B cell (primary cell): ENCODE measurements at regions of chr17 and their contacts with region 1.

Region 1: GRCh38 chr17:17237026-17237799 is at the start of gene FLCN:
- DNase-seq: peak; percentile 98
- ATAC-seq: peak; percentile 89
- H3K4me3 ChIP-seq: peak within 1 kb of the TSS; percentile 83 to 96 (median 91)
- H3K4me3 Mint-ChIP-seq: peak within 1 kb of the TSS; percentile 91
- H3K27ac ChIP-seq: peak within 1 kb of the TSS; percentile 95 to 100
- H3K27ac Mint-ChIP-seq: peak within 1 kb of the TSS; percentile 99
- H3K4me1 ChIP-seq: peaks cover 9 to 21% of the 10 kb centered on the region in 2 donors
- H3K4me1 Mint-ChIP-seq: peaks cover 24% of the 10 kb centered on the region
- H3K27me3 ChIP-seq: no peaks in the 10 kb centered on the region
- H3K27me3 Mint-ChIP-seq: no peaks in the 10 kb centered on the region
- CTCF ChIP-seq: no peak
- total RNA-seq, gene FLCN: 128 and 144 TPM in 2 replicates

Region 2: GRCh38 chr17:17186051-17186450 is 51.2 kb before region 1 on chr17:
- CTCF ChIA-PET with region 1: no interaction called
- POLR2A ChIA-PET with region 1: interaction called, 7 read pairs
- intact Hi-C with region 1: loop called (anchors 10 kb)
- DNase-seq: no peak
- ATAC-seq: no peak
- H3K4me3 ChIP-seq: no peak overlapping the region
- H3K4me3 Mint-ChIP-seq: no peak overlapping the region
- H3K27ac ChIP-seq: peak overlapping the region in 1 of 2 donors; percentile 52
- H3K27ac Mint-ChIP-seq: peak overlapping the region; percentile 32
- H3K4me1 ChIP-seq: peaks cover 19 to 37% of the 10 kb centered on the region in 2 donors
- H3K4me1 Mint-ChIP-seq: peaks cover 31% of the 10 kb centered on the region
- H3K27me3 ChIP-seq: no peaks in the 10 kb centered on the region
- H3K27me3 Mint-ChIP-seq: no peaks in the 10 kb centered on the region
- CTCF ChIP-seq: no peak

Region 3: GRCh38 chr17:17206124-17206912 is 30.9 kb before region 1 on chr17 and contains the start of gene PLD6:
- CTCF ChIA-PET with region 1: no interaction called
- POLR2A ChIA-PET with region 1: interaction called, 7 read pairs
- intact Hi-C with region 1: loop called (anchors 1 kb)
- DNase-seq: peak; percentile 96
- ATAC-seq: peak; percentile 85
- H3K4me3 ChIP-seq: peak within 1 kb of the TSS in 4 of 5 experiments; percentile 57 to 71 (median 59)
- H3K4me3 Mint-ChIP-seq: peak within 1 kb of the TSS; percentile 93
- H3K27ac ChIP-seq: peak within 1 kb of the TSS; percentile 65 to 66
- H3K27ac Mint-ChIP-seq: peak within 1 kb of the TSS; percentile 89
- H3K4me1 ChIP-seq: peaks cover 14 to 25% of the 10 kb centered on the region in 2 donors
- H3K4me1 Mint-ChIP-seq: peaks cover 20% of the 10 kb centered on the region
- H3K27me3 ChIP-seq: no peaks in the 10 kb centered on the region
- H3K27me3 Mint-ChIP-seq: no peaks in the 10 kb centered on the region
- CTCF ChIP-seq: no peak
- total RNA-seq, gene PLD6: 4.1 and 5.0 TPM in 2 replicates

Region 4: GRCh38 chr17:17216776-17217175 is 20.4 kb before region 1 on chr17:
- CTCF ChIA-PET with region 1: interaction called, 3 read pairs
- POLR2A ChIA-PET with region 1: interaction called, 12 read pairs
- intact Hi-C with region 1: no loop called
- DNase-seq: no peak
- ATAC-seq: no peak
- H3K4me3 ChIP-seq: no peak overlapping the region
- H3K4me3 Mint-ChIP-seq: no peak overlapping the region
- H3K27ac ChIP-seq: no peak overlapping the region
- H3K27ac Mint-ChIP-seq: no peak overlapping the region
- H3K4me1 ChIP-seq: no peaks in the 10 kb centered on the region
- H3K4me1 Mint-ChIP-seq: no peaks in the 10 kb centered on the region
- H3K27me3 ChIP-seq: no peaks in the 10 kb centered on the region
- H3K27me3 Mint-ChIP-seq: no peaks in the 10 kb centered on the region
- CTCF ChIP-seq: no peak

Region 5: DNA sequence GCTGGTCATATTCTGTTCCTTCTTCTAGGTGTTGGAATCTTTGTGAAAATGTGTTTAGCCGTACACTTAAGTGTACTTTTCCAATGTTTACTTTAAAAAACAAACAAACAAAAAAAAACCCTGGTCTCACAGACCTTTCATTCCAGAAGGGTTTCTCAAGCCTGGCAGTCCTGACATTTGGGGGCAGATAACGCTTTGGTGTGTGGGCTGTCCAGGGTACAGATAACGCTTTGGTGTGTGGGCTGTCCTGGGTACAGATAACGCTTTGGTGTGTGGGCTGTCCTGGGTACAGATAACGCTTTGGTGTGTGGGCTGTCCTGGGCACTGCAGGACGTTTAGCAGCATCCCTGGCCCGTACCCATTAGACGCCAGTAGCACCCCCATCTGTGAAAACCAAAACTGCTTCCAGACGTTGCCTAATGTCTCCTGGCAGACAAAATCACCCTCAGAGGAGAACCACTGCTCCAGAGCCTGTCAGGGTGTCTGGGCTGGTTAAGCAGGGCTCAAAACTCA is 15.0 kb after region 1 on chr17:
- CTCF ChIA-PET with region 1: no interaction called
- POLR2A ChIA-PET with region 1: no interaction called
- intact Hi-C with region 1: no loop called
- DNase-seq: no peak
- ATAC-seq: no peak
- H3K4me3 ChIP-seq: no peak overlapping the region
- H3K4me3 Mint-ChIP-seq: no peak overlapping the region
- H3K27ac ChIP-seq: no peak overlapping the region
- H3K27ac Mint-ChIP-seq: no peak overlapping the region
- H3K4me1 ChIP-seq: no peaks in the 10 kb centered on the region
- H3K4me1 Mint-ChIP-seq: no peaks in the 10 kb centered on the region
- H3K27me3 ChIP-seq: no peaks in the 10 kb centered on the region
- H3K27me3 Mint-ChIP-seq: no peaks in the 10 kb centered on the region
- CTCF ChIP-seq: no peak

Region 6: DNA sequence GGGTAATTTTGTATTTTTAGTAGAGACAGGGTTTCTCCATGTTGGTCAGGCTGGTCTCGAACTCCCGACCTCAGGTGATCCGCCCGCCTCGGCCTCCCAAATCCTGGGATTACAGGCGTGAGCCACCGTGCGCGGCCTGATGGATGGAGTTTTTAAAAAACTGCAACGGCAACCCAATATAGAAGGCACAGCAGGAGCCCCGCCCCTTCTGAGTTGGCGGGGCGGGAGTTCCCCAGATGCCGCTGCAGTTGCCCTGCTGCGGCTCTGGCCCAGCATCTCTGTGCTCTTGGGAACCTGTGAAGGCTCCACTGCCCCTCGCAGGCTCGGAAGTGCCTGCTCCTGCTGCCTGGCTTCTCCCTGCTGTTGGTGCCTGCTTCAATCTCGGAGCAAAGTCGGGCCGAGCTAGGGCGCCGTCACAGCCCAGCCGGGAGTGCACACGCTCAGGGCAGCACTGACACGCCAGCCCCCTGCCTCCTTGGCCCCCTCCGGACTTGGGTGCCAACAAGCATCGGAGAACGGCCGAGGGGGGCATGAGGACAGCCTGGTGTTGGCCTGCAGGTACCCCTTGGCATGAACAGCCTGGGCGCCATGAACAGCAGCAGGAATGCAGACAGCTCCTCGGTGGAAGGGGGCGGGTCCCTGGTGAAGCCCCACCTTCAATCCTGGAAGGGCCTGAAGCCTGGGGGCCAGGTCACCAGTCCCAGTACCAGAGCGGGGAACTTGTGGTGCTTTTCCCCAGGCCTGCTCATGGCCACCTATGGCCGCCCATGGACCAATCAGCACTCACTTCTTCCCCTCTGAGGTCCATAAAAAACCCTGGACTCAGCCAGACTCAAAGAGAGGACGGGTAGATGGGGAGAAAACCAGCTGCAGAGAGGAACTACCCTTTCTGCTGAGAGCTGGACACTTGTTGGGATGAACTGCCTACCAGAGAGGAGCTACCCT is 63.7 kb after region 1 on chr17:
- CTCF ChIA-PET with region 1: no interaction called
- POLR2A ChIA-PET with region 1: no interaction called
- intact Hi-C with region 1: no loop called
- DNase-seq: peak; percentile 73
- ATAC-seq: peak; percentile 63
- H3K4me3 ChIP-seq: peak overlapping the region in 4 of 5 experiments; percentile 19 to 50 (median 42)
- H3K4me3 Mint-ChIP-seq: peak overlapping the region; percentile 74
- H3K27ac ChIP-seq: no peak overlapping the region
- H3K27ac Mint-ChIP-seq: no peak overlapping the region
- H3K4me1 ChIP-seq: peaks cover 36 to 41% of the 10 kb centered on the region in 2 donors
- H3K4me1 Mint-ChIP-seq: peaks cover 41% of the 10 kb centered on the region
- H3K27me3 ChIP-seq: peaks cover 0 to 6% (median under 1%) of the 10 kb centered on the region in 4 experiments
- H3K27me3 Mint-ChIP-seq: no peaks in the 10 kb centered on the region
- CTCF ChIP-seq: no peak